Mammary epithelial cell (primary cell): ENCODE measurements at regions of chr6 and their contacts with region 1.

Region 1: GRCh38 chr6:170178561-170179477 is 112.1 kb downstream of the DLL1 start:
- DNase-seq: peak; percentile 69
- H3K4me3 ChIP-seq: no peak overlapping the region
- H3K27ac ChIP-seq: no peak overlapping the region
- H3K4me1 ChIP-seq: peaks cover 17% of the 10 kb centered on the region
- H3K27me3 ChIP-seq: no peaks in the 10 kb centered on the region
- CTCF ChIP-seq: no peak

Region 2: DNA sequence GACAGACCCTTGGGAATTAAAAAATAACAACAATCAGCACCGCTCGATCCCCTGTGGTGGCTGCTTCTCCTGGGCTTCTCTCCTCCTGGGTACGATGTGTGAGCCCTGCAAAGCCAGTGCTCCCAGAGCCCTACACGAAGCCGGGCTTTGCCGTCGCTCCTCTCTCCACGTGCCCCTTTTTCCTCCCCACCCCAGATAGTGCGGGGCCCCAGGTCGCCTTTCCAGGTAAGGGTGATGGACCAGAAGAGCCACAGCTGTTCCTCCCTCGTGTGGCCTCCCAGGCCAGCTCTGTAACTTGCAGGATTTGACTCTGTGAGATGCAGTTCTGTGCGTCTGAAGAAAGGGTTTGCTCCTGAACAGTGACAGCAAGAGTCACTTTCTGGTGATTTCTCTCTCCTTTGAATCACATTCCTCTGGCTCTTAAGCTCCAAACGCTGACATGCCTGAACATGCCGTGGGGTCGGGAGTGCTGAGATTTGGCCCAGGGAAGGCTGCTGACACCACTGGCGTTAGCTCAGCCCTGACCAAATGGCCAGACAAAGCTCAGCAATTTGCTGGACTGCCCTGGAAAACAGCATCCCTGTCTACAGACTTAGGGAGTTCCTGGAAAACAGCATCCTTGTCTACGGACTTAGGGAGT is 52.8 kb after region 1 on chr6:
- CTCF ChIA-PET with region 1: no interaction called
- dilution Hi-C with region 1: no loop called
- in situ Hi-C with region 1: no loop called
- intact Hi-C with region 1: loop called (anchors 1 kb)
- DNase-seq: peak; percentile 47
- H3K4me3 ChIP-seq: no peak overlapping the region
- H3K27ac ChIP-seq: no peak overlapping the region
- H3K4me1 ChIP-seq: peaks cover 28% of the 10 kb centered on the region
- H3K27me3 ChIP-seq: no peaks in the 10 kb centered on the region
- CTCF ChIP-seq: no peak